A549 (cell line): ENCODE measurements at regions of chr1 and their contacts with region 1.

Region 1: DNA sequence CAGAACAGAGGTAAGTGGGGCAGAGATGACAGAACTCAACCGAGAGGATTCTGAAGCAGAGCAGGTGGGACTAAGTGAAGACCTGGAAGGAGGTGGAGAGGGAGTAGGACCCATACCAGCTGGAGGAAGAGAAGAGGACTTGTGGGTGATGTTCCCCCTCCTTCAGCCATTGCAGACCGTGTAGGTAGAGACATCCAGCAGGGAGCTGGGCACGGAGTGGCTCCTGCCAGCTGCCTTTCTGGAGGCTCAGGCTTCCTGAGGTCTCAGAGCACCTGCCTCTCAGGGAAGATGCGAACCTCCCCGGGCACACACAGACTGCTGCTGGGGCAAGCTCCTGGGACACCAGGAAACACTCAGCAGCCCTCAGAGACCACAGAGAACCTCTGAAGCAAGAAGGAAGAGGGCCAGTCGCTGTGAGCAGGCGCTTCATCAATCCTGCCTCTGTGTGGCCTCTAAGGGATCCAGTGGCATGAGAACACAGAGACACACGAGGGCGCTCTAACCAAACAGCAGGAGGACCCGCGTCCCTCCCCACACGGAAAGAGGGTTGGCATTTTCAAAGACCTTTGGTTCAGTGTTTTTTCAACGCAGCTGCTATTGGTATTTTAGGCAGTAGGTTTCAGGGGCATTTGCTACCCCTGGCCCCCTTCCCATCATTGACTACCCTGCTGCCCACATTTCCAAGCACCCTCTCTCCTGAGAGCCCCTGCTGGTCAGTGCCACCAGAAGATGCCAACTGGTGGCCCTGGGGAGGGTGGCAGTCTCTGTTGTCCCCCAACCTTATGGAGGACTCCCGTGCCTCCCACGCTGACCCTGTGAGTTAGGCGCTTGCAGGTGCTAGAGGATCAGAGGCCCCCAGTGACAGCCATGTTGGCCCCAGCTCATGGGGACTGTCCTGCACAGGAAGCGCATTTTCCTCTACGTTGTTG is 89.6 kb upstream of the EDN2 start:
- DNase-seq: peak; percentile 62 to 65
- ATAC-seq: peak; percentile 94 to 97
- H3K4me3 ChIP-seq: no peak overlapping the region
- H3K27ac ChIP-seq: peak overlapping the region in 1 of 2 experiments; percentile 48; a peak in 1 of 6 replicates
- H3K4me1 ChIP-seq: no peaks in the 10 kb centered on the region
- CTCF ChIP-seq: peak; percentile 79
- EP300 ChIP-seq: no peak
- POLR2A ChIP-seq: no peak
- RAD21 ChIP-seq: peak; percentile 91 to 93

Region 2: GRCh38 chr1:41484372-41485241 is 89.4 kb before region 1 on chr1 and contains the start of gene EDN2:
- CTCF ChIA-PET with region 1: no interaction called
- POLR2A ChIA-PET with region 1: no interaction called
- DNase-seq: peak; percentile 28 to 52
- ATAC-seq: peak; percentile 73 to 81
- H3K4me3 ChIP-seq: peak within 1 kb of the TSS; percentile 9; the same call in 1 of the 3 replicates
- H3K27ac ChIP-seq: peak within 1 kb of the TSS; percentile 79 to 93
- H3K4me1 ChIP-seq: peaks cover 72% of the 10 kb centered on the region
- CTCF ChIP-seq: no peak
- EP300 ChIP-seq: no peak
- POLR2A ChIP-seq: peak; percentile 38; the same call in 1 of the 2 replicates
- RAD21 ChIP-seq: no peak
- polyA plus RNA-seq, gene EDN2: 1.2 and 1.6 TPM in 2 replicates

Region 3: GRCh38 chr1:41509270-41509671 is 64.8 kb before region 1 on chr1:
- CTCF ChIA-PET with region 1: no interaction called
- POLR2A ChIA-PET with region 1: no interaction called
- DNase-seq: no peak
- ATAC-seq: no peak
- H3K4me3 ChIP-seq: no peak overlapping the region
- H3K27ac ChIP-seq: no peak overlapping the region
- H3K4me1 ChIP-seq: no peaks in the 10 kb centered on the region
- CTCF ChIP-seq: no peak
- EP300 ChIP-seq: no peak
- POLR2A ChIP-seq: no peak
- RAD21 ChIP-seq: no peak

Region 4: GRCh38 chr1:41641478-41641819 is 67.4 kb after region 1 on chr1:
- CTCF ChIA-PET with region 1: no interaction called
- POLR2A ChIA-PET with region 1: no interaction called
- DNase-seq: no peak
- ATAC-seq: no peak
- H3K4me3 ChIP-seq: no peak overlapping the region
- H3K27ac ChIP-seq: no peak overlapping the region
- H3K4me1 ChIP-seq: no peaks in the 10 kb centered on the region
- CTCF ChIP-seq: no peak
- EP300 ChIP-seq: no peak
- POLR2A ChIP-seq: no peak
- RAD21 ChIP-seq: no peak

Region 5: GRCh38 chr1:41758904-41759548 is 185.0 kb after region 1 on chr1:
- CTCF ChIA-PET with region 1: interaction called, 10 read pairs
- POLR2A ChIA-PET with region 1: no interaction called
- DNase-seq: no peak
- ATAC-seq: no peak
- H3K4me3 ChIP-seq: no peak overlapping the region
- H3K27ac ChIP-seq: no peak overlapping the region
- H3K4me1 ChIP-seq: no peaks in the 10 kb centered on the region
- CTCF ChIP-seq: no peak
- EP300 ChIP-seq: no peak
- POLR2A ChIP-seq: no peak
- RAD21 ChIP-seq: no peak

Region 6: GRCh38 chr1:41795205-41795762 is 221.2 kb after region 1 on chr1:
- CTCF ChIA-PET with region 1: interaction called, 15 read pairs
- POLR2A ChIA-PET with region 1: no interaction called
- DNase-seq: peak in 1 of 2 experiments; percentile 19
- ATAC-seq: peak in 1 of 2 experiments; percentile 54; a peak in 1 of 6 replicates
- H3K4me3 ChIP-seq: no peak overlapping the region
- H3K27ac ChIP-seq: no peak overlapping the region
- H3K4me1 ChIP-seq: no peaks in the 10 kb centered on the region
- CTCF ChIP-seq: peak; percentile 43
- EP300 ChIP-seq: no peak
- POLR2A ChIP-seq: no peak
- RAD21 ChIP-seq: peak; percentile 40 to 44; a peak in 3 of 5 replicates

Region 7: GRCh38 chr1:42081475-42081874 is 507.4 kb after region 1 on chr1:
- CTCF ChIA-PET with region 1: no interaction called
- POLR2A ChIA-PET with region 1: no interaction called
- DNase-seq: no peak
- ATAC-seq: no peak
- H3K4me3 ChIP-seq: no peak overlapping the region
- H3K27ac ChIP-seq: no peak overlapping the region
- H3K4me1 ChIP-seq: no peaks in the 10 kb centered on the region
- CTCF ChIP-seq: no peak
- EP300 ChIP-seq: no peak
- POLR2A ChIP-seq: no peak
- RAD21 ChIP-seq: no peak